Adrenal gland (tissue), 19 donors: ENCODE measurements at regions of chr15 and their contacts with region 1.

Region 1: DNA sequence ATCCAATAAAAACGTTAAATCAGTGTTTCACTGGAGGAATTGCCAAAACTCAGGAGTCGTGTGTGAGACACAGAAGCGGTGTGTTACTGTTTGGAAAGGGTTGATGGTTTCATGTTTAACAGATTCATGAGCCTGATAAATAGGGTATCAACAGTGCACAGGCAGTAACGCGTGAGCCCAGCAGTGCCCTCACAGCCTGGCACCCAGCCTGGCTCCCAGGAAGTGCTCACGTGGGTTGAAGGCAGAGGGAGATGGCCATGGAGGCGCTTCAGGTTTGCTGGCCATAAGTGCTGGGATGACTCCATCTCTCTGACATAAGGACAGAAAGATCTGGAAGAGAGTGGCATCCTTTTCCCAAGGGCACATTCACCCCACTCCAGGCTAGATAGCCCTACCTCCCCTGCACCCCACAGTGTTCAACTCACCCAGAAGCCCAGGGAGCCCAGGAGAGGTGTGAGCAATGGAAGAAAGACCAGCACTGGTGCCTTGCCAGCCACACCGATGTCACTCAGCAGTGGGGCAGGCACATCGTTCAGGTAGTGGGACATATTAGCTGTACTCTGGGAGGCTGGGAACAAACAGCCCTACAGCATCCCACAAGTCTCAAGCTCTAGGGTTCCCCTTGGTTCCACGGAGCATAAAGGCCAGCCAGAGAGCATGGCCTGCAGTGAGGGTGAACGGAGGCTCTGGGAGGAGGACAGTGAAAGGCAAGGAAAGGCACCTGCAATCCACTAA is 164.3 kb downstream of the LRRK1 start:
- DNase-seq: no peak
- H3K4me3 ChIP-seq: no peak overlapping the region
- H3K27ac ChIP-seq: no peak overlapping the region
- H3K4me1 ChIP-seq: peaks cover 0 to 5% of the 10 kb centered on the region in 2 donors
- H3K27me3 ChIP-seq: no peaks in the 10 kb centered on the region
- CTCF ChIP-seq: no peak
- POLR2A ChIP-seq: no peak

Region 2: DNA sequence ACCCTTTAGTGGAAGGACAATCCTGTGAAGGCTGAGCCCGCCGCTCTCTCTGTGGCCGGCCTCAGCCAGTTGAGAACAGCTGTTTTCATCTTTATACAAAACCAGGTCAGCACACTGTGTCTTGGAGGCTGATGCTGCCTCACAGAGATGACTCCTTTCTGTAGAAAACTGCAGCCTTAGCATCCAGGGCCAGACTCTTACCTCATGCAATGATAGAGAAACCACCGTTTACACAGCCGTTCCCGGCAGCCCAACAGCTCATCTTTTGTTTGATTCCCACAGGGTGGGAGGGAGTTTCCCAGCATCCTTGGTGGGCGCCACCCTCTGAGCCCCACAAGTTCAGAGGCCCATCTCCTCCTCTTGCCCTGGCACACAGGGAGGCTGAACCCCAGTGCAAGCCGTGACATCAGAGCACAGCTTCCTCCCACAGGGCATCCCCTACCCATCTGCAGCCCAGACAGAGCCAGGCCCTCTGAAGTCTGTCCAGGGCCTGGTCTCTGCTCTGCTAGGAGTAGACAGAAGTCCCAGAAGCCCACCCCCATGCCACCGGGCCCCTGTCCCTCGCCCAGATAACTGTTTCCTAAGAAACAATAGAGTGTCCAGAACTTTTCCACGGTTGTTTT is 59.3 kb before region 1 on chr15:
- intact Hi-C with region 1: loop called (anchors 5 kb)
- DNase-seq: peak in 4 of 7 donors; percentile 29 to 59 (median 31)
- H3K4me3 ChIP-seq: no peak overlapping the region
- H3K27ac ChIP-seq: peak overlapping the region in 3 of 5 donors; percentile 30 to 81 (median 77)
- H3K4me1 ChIP-seq: peaks cover 0 to 8% of the 10 kb centered on the region in 2 donors
- H3K27me3 ChIP-seq: no peaks in the 10 kb centered on the region
- CTCF ChIP-seq: no peak
- POLR2A ChIP-seq: no peak